ENCODE measurements at regions of chr13 and their contacts with region 1.

Region 1: DNA sequence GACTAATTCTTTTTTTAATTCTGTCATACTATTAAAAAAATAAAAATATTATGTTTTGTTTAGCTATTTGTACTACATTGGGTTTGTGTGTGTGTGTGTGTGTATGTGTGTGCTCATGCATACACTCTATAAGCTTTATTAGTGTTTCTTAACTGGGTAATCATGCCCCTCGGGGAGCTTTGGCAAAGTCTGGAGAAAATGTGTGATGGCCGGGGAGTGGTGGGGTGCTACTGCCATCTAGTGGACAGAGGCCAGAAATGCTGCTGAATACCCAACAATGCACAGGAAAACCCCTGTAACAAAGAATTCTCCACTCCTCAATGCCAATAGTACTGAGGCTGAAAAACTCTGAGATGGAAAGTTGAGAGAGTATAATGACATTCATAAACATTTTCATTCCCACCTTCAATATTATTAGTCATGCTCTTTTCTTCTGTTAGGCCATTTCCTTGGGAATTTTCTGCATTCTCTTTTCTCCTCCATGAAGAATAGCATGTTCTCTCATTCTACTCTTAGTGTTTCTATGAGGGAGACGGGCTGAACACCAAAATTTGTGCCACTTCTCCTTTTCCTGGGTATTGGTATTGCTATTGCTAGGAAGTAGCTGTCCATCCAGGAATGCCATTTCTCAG is 157.3 kb downstream of the DNAJC3 start:
- DNase-seq: peak; percentile 15
- H3K4me3 ChIP-seq: no peak overlapping the region
- H3K27ac ChIP-seq: no peak overlapping the region
- H3K27me3 ChIP-seq: no peaks in the 10 kb centered on the region
- CTCF ChIP-seq: peak; percentile 95

Region 2: GRCh38 chr13:95494082-95494681 is 340.1 kb before region 1 on chr13:
- CTCF ChIA-PET with region 1: interaction called, 19 read pairs
- POLR2A ChIA-PET with region 1: no interaction called
- DNase-seq: peak; percentile 29
- H3K4me3 ChIP-seq: no peak overlapping the region
- H3K27ac ChIP-seq: no peak overlapping the region
- H3K27me3 ChIP-seq: peaks cover 2% of the 10 kb centered on the region
- CTCF ChIP-seq: peak; percentile 75

Region 3: GRCh38 chr13:95536632-95537241 is 297.5 kb before region 1 on chr13:
- CTCF ChIA-PET with region 1: interaction called, 75 read pairs
- POLR2A ChIA-PET with region 1: no interaction called
- DNase-seq: no peak
- H3K4me3 ChIP-seq: no peak overlapping the region
- H3K27ac ChIP-seq: no peak overlapping the region
- H3K27me3 ChIP-seq: no peaks in the 10 kb centered on the region
- CTCF ChIP-seq: peak; percentile 49

Region 4: GRCh38 chr13:95607363-95607762 is 226.9 kb before region 1 on chr13:
- CTCF ChIA-PET with region 1: interaction called, 16 read pairs
- POLR2A ChIA-PET with region 1: no interaction called
- DNase-seq: no peak
- H3K4me3 ChIP-seq: no peak overlapping the region
- H3K27ac ChIP-seq: no peak overlapping the region
- H3K27me3 ChIP-seq: no peaks in the 10 kb centered on the region
- CTCF ChIP-seq: no peak

Region 5: DNA sequence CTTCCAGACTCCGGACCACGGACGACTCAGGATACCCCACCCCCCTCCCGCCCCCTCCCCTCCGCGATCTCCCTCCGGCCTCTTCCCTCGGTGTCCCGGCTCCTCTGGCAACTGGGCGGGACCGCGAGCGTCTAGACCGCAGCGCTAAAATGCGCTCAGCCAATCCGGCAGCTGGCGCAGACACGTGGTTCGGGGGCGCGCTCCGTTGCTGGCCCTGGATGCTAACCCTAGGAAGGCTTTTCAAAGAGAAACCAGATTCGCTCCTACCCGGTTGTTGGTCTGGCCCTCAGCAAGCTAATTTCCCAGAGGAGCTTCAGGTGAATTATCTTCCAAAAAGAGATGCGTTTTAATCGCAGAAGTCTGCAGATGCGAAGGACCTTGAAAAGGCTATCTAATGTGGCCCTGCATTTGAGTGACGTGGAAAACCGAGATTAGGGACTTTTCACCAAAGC is 189.6 kb before region 1 on chr13 and contains the start of gene DZIP1:
- CTCF ChIA-PET with region 1: interaction called, 17 read pairs
- POLR2A ChIA-PET with region 1: no interaction called
- DNase-seq: peak; percentile 64
- H3K4me3 ChIP-seq: peak within 1 kb of the TSS; percentile 65
- H3K27ac ChIP-seq: peak within 1 kb of the TSS; percentile 65
- H3K27me3 ChIP-seq: no peaks in the 10 kb centered on the region
- CTCF ChIP-seq: no peak
- polyA plus RNA-seq, gene DZIP1: 30.5 and 32.9 TPM in 2 replicates

Region 6: GRCh38 chr13:95689582-95689926 is 144.7 kb before region 1 on chr13:
- CTCF ChIA-PET with region 1: no interaction called
- POLR2A ChIA-PET with region 1: no interaction called
- DNase-seq: no peak
- H3K4me3 ChIP-seq: no peak overlapping the region
- H3K27ac ChIP-seq: no peak overlapping the region
- H3K27me3 ChIP-seq: no peaks in the 10 kb centered on the region
- CTCF ChIP-seq: no peak

Region 7: DNA sequence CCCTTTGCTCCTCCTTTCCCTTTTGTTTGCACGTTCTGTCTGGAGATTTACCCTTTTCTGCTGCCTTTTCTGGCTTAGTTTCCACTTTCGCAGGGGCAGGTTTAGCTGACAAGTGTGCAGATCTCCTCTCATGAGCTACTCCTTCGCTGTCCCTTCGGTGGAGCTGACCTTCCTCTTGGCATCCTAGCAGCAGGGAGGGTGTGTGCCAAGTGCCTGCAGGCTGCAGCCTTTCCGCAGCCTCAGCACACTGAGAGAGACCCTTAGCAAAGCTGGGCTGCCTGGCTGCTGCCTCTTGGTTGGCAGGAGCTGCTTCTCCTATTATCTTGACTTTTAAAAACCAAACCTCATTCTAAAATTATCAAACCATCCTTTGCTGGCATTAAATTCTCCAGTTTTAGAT is 24.8 kb before region 1 on chr13:
- CTCF ChIA-PET with region 1: interaction called, 18 read pairs
- POLR2A ChIA-PET with region 1: no interaction called
- DNase-seq: no peak
- H3K4me3 ChIP-seq: no peak overlapping the region
- H3K27ac ChIP-seq: no peak overlapping the region
- H3K27me3 ChIP-seq: no peaks in the 10 kb centered on the region
- CTCF ChIP-seq: no peak

Region 8: GRCh38 chr13:95858286-95859075 is 24.2 kb after region 1 on chr13:
- CTCF ChIA-PET with region 1: interaction called, 16 read pairs
- POLR2A ChIA-PET with region 1: no interaction called
- DNase-seq: no peak
- H3K4me3 ChIP-seq: no peak overlapping the region
- H3K27ac ChIP-seq: no peak overlapping the region
- H3K27me3 ChIP-seq: no peaks in the 10 kb centered on the region
- CTCF ChIP-seq: no peak

Region 9: DNA sequence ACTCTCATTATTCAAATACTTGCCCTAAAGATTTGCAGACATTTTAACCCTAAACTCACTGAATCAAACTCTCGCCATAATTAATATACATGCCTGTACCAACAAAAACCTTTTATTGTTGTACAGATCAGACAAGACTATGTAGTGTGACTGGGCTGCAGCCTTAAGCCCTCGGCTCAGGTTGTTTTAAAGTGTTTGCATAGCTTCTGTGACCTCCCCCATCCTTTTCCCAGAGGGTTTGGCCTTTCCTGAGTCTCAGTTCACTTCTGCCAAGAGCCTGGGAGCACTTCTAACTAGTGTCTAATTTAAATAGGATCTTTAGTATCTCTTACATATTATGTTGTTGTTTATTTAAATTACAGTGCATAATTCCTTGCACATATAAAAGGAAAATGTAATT is 413.9 kb after region 1 on chr13:
- CTCF ChIA-PET with region 1: no interaction called
- POLR2A ChIA-PET with region 1: no interaction called
- DNase-seq: no peak
- H3K4me3 ChIP-seq: no peak overlapping the region
- H3K27ac ChIP-seq: no peak overlapping the region
- H3K27me3 ChIP-seq: no peaks in the 10 kb centered on the region
- CTCF ChIP-seq: no peak

Region 10: GRCh38 chr13:96809366-96810096 is 975.3 kb after region 1 on chr13:
- CTCF ChIA-PET with region 1: no interaction called
- POLR2A ChIA-PET with region 1: no interaction called
- DNase-seq: no peak
- H3K4me3 ChIP-seq: no peak overlapping the region
- H3K27ac ChIP-seq: no peak overlapping the region
- H3K27me3 ChIP-seq: no peaks in the 10 kb centered on the region
- CTCF ChIP-seq: no peak